CD8-positive, alpha-beta T cell (primary cell): ENCODE measurements at regions of chr18 and their contacts with region 1.

Region 1: GRCh38 chr18:74370115-74370514 is 54.5 kb downstream of the C18orf63 start:
- DNase-seq: no peak
- ATAC-seq: no peak
- H3K4me3 ChIP-seq: no peak overlapping the region
- H3K4me3 Mint-ChIP-seq: no peak overlapping the region
- H3K27ac ChIP-seq: no peak overlapping the region
- H3K27ac Mint-ChIP-seq: no peak overlapping the region
- H3K4me1 ChIP-seq: peaks cover 55% of the 10 kb centered on the region
- H3K4me1 Mint-ChIP-seq: peaks cover 56% of the 10 kb centered on the region
- H3K27me3 ChIP-seq: peaks cover 0 to 3% of the 10 kb centered on the region in 2 experiments
- H3K27me3 Mint-ChIP-seq: peaks cover 2% of the 10 kb centered on the region
- CTCF ChIP-seq: no peak

Region 2: GRCh38 chr18:74291771-74292540 is 78.2 kb before region 1 on chr18 and contains the start of gene CYB5A:
- CTCF ChIA-PET with region 1: no interaction called
- POLR2A ChIA-PET with region 1: no interaction called
- intact Hi-C with region 1: loop called in 1 of 2 experiments (anchors 5 kb)
- DNase-seq: peak; percentile 98 to 99 (median 99)
- ATAC-seq: peak; percentile 94
- H3K4me3 ChIP-seq: peak within 1 kb of the TSS; percentile 85 to 100
- H3K4me3 Mint-ChIP-seq: no peak within 1 kb of the TSS
- H3K27ac ChIP-seq: peak within 1 kb of the TSS; percentile 44 to 61
- H3K27ac Mint-ChIP-seq: peak within 1 kb of the TSS; percentile 86
- H3K4me1 ChIP-seq: peaks cover 8% of the 10 kb centered on the region
- H3K4me1 Mint-ChIP-seq: peaks cover 21% of the 10 kb centered on the region
- H3K27me3 ChIP-seq: no peaks in the 10 kb centered on the region
- H3K27me3 Mint-ChIP-seq: no peaks in the 10 kb centered on the region
- CTCF ChIP-seq: peak; percentile 4
- total RNA-seq, gene CYB5A: 4.4 to 5.9 TPM

Region 3: GRCh38 chr18:74412116-74412880 is 42.2 kb after region 1 on chr18:
- CTCF ChIA-PET with region 1: interaction called, 3 read pairs
- POLR2A ChIA-PET with region 1: interaction called, 3 read pairs
- intact Hi-C with region 1: loop called (anchors 5 kb)
- DNase-seq: no peak
- ATAC-seq: no peak
- H3K4me3 ChIP-seq: no peak overlapping the region
- H3K4me3 Mint-ChIP-seq: no peak overlapping the region
- H3K27ac ChIP-seq: no peak overlapping the region
- H3K27ac Mint-ChIP-seq: no peak overlapping the region
- H3K4me1 ChIP-seq: peaks cover 19% of the 10 kb centered on the region
- H3K4me1 Mint-ChIP-seq: peaks cover 22% of the 10 kb centered on the region
- H3K27me3 ChIP-seq: no peaks in the 10 kb centered on the region
- H3K27me3 Mint-ChIP-seq: no peaks in the 10 kb centered on the region
- CTCF ChIP-seq: no peak

Region 4: DNA sequence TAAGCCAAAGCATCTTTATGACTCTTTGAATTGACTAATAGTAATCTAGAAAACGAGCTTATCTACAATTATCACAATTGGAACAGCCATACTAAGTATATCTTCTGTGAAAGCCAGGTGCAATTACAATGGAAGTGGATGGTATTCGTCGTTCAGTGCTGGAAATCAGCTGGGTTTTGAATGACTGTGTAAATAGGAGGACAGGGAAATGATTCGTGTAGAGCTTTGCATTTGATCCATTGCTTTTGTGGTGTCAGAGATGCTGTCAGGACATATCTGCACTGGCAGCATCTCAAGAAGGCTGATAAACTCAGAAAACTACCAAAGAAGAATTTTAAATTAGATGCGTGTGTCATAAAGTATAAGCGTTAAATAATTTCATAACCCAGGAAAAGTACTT is 414.6 kb after region 1 on chr18:
- CTCF ChIA-PET with region 1: no interaction called
- POLR2A ChIA-PET with region 1: no interaction called
- intact Hi-C with region 1: no loop called
- DNase-seq: no peak
- ATAC-seq: no peak
- H3K4me3 ChIP-seq: no peak overlapping the region
- H3K4me3 Mint-ChIP-seq: no peak overlapping the region
- H3K27ac ChIP-seq: no peak overlapping the region
- H3K27ac Mint-ChIP-seq: no peak overlapping the region
- H3K4me1 ChIP-seq: no peaks in the 10 kb centered on the region
- H3K4me1 Mint-ChIP-seq: no peaks in the 10 kb centered on the region
- H3K27me3 ChIP-seq: no peaks in the 10 kb centered on the region
- H3K27me3 Mint-ChIP-seq: no peaks in the 10 kb centered on the region
- CTCF ChIP-seq: no peak